ENCODE measurements at regions of chr5 and their contacts with region 1.

Region 1: GRCh38 chr5:138449501-138450239 is 10.8 kb downstream of the REEP2 start:
- DNase-seq: peak; percentile 84 to 93 (median 90)
- ATAC-seq: peak; percentile 98
- H3K4me3 ChIP-seq: no peak overlapping the region
- H3K4me1 ChIP-seq: no peaks in the 10 kb centered on the region
- CTCF ChIP-seq: peak; percentile 89

Region 2: GRCh38 chr5:138503487-138504270 is 54.0 kb after region 1 on chr5:
- intact Hi-C with region 1: loop called (anchors 5 to 10 kb)
- DNase-seq: peak in 1 of 3 donors; percentile 47
- ATAC-seq: peak; percentile 88
- H3K4me3 ChIP-seq: no peak overlapping the region
- H3K4me1 ChIP-seq: no peaks in the 10 kb centered on the region
- CTCF ChIP-seq: peak; percentile 43

Region 3: DNA sequence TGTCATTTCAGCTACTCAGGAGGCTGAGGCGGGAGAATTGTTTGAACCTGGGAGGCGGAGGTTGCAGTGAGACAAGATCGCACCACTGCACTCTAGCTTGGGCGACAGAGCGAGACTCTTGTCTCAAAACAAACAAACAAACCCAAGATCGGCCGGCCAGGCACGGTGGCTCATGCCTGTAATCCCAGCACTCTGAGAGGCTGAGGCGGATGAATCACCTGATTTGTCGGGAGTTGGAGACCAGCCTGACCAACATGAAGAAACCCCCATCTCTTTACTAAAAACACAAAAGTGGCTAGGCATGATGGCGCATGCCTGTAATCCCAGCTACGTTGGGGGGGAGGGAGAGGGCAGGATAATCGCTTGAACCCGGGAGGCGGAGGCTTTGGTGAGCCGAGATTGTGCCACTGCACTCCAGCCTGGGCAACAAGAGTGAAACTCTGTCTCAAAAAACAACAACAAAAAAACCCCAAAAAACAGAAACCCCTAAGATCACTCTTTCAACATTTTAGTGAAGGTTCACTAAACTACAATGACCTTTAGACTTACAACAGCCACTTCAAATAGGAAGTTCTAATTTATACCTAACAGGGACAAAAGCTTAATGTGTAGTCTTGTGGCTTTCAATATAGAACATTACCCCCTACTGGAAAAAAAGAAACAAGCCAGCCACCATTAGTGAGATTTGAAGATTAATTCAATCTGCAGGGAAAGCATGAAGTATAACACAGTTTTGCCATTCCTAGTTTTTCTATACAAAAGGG is 118.6 kb after region 1 on chr5:
- intact Hi-C with region 1: no loop called
- DNase-seq: no peak
- ATAC-seq: no peak
- H3K4me3 ChIP-seq: no peak overlapping the region
- H3K4me1 ChIP-seq: no peaks in the 10 kb centered on the region
- CTCF ChIP-seq: no peak